HEK293 (cell line): ENCODE measurements at regions of chr12 and their contacts with region 1.

Region 1: GRCh38 chr12:6873094-6874014 is at the start of gene SPSB2:
- H3K4me3 ChIP-seq: peak within 1 kb of the TSS; percentile 67
- H3K27ac ChIP-seq: peak within 1 kb of the TSS; percentile 54; the same call in 1 of the 2 replicates
- H3K4me1 ChIP-seq: peaks cover 2% of the 10 kb centered on the region; the same call in 1 of the 2 replicates
- CTCF ChIP-seq: no peak

Region 2: GRCh38 chr12:6653987-6654386 is 219.4 kb before region 1 on chr12:
- CTCF ChIA-PET with region 1: no interaction called
- POLR2A ChIA-PET with region 1: no interaction called
- H3K4me3 ChIP-seq: no peak overlapping the region
- H3K27ac ChIP-seq: no peak overlapping the region
- H3K4me1 ChIP-seq: no peaks in the 10 kb centered on the region
- CTCF ChIP-seq: no peak

Region 3: DNA sequence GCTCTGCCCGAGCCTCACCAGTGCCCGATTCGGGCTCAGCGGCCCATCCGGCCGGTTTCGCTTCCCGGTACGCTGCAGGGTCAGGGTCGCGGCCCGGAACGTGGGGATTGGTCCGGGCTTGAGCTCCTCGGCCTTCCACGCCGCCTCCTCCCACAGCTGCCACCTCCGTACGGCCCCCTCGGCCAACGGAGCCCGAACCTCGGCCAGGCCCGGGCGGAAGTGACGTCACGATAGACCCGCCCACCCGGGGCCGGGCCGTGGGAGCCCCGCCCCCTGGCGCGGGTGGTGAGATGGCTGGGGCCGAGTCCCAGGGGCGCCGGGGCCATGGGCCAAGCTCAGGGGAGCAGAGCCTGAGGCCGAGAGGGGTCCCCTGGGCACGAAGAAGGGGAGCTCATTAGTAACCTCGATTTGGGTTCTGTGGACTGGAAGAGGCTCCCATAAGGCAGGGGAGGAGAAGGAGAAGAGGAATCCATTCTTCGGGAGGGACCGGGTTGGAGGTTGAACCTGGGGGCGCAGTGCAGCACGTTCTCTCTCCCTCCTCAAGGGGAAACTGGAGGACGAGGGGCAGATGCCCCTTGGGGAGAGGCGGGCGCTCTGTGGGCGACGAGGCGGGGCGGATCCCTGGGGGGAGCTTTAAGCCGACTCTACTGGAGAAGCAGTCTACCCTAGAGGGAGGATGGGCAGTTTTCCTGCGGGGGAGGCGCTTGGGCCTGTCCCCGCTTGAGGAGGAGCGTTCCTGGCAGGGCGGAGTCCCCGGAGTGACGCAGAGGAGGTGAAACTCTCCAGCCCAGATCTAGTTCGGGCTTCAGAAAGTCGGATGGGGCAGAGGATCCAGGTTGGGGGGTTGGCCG is 120.2 kb before region 1 on chr12 and contains the start of gene MLF2:
- CTCF ChIA-PET with region 1: interaction called, 12 read pairs
- POLR2A ChIA-PET with region 1: interaction called, 13 read pairs
- H3K4me3 ChIP-seq: peak within 1 kb of the TSS; percentile 99
- H3K27ac ChIP-seq: peak within 1 kb of the TSS; percentile 93
- H3K4me1 ChIP-seq: 0 out of 2 replicates have a peak, but pooled peaks cover 2% of the 10 kb centered on the region
- CTCF ChIP-seq: no peak; the same call in 1 of the 2 replicates

Region 4: GRCh38 chr12:6792522-6793201 is 80.7 kb before region 1 on chr12:
- CTCF ChIA-PET with region 1: no interaction called
- POLR2A ChIA-PET with region 1: no interaction called
- H3K4me3 ChIP-seq: no peak overlapping the region
- H3K27ac ChIP-seq: no peak overlapping the region
- H3K4me1 ChIP-seq: no peaks in the 10 kb centered on the region
- CTCF ChIP-seq: no peak

Region 5: DNA sequence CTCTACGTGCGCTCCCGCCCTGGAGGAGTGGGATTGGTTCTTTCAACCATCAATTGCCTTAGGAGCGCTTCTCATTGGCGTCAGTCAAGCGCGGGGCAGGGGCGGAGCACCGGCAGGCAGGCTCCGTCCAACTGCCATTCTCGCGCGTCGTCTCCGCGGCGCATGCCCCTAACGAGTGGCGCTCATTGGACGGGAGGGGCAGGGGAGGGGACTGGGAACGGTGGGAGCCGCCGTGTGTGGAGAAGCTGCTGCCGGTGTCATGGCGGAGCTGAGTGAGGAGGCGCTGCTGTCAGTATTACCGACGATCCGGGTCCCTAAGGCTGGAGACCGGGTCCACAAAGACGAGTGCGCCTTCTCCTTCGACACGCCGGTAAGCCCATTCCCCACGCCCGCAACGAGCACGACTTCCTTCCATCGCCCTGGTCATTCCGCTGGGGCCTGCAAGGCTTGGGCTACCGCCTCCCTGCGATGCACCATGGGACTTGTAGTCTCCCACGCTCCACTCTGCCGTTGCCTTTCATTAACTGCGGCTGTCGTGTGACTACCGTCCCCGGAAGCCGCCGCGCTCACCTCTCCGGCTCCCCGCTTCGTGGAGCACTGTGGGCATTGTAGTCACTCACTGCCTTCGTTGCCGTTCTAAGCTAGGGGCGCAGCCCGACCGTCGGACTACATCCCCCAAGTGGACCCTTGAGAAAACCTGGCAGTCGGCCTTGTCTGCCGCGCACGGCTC is 21.3 kb before region 1 on chr12 and contains the start of gene USP5:
- CTCF ChIA-PET with region 1: interaction called, 71 read pairs
- POLR2A ChIA-PET with region 1: interaction called, 183 read pairs
- H3K4me3 ChIP-seq: peak within 1 kb of the TSS; percentile 76
- H3K27ac ChIP-seq: peak within 1 kb of the TSS; percentile 58
- H3K4me1 ChIP-seq: peaks cover 11% of the 10 kb centered on the region
- CTCF ChIP-seq: peak; percentile 70

Region 6: DNA sequence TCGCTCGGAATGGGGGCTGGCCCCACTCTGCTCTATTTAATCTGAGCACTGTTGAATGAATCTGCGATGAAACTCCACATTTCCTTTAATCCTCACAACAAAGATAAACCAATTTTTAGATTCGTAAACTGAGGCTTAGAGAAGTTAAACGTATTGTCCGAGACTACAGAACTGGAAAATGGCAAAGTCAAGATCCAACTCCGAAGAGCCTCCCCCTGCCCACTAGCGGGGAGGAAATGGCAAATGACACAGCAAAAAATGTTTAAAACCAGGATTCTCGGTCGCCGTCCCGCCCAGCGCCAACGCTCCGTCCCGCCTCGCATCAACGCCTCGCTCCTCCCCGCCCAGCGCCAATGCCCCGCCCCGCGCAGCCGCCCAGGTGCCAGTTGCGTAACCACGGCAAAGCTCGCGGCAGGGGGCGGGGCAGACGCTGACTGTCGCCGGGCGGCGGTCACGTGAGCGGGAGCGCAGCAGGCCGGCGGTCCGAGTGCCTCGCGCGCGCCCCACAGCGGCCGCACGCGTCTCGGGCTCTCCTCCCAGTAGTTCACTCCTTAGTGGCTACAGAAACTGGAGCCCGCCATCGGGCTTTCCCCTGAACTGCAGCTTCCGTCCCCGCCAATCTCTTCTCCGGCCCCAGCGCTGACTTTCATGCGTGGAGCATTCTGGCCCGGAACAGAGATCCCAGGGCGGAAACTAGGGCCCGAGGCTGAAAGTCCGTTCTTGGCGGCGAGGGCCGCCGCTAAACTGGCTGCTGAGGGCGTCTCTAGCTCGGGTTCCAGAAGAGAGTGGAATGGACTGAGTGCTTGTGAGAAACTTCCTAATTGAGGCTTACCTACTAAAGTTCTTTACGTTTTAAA is 17.7 kb after region 1 on chr12:
- CTCF ChIA-PET with region 1: interaction called, 35 read pairs
- POLR2A ChIA-PET with region 1: interaction called, 56 read pairs
- H3K4me3 ChIP-seq: peak overlapping the region; percentile 30
- H3K27ac ChIP-seq: peak overlapping the region; percentile 78
- H3K4me1 ChIP-seq: no peaks in the 10 kb centered on the region
- CTCF ChIP-seq: peak; percentile 86

Region 7: GRCh38 chr12:6904280-6905278 is 31.2 kb after region 1 on chr12 and contains the start of gene LRRC23:
- CTCF ChIA-PET with region 1: interaction called, 7 read pairs
- POLR2A ChIA-PET with region 1: interaction called, 10 read pairs
- H3K4me3 ChIP-seq: peak within 1 kb of the TSS; percentile 42
- H3K27ac ChIP-seq: peak within 1 kb of the TSS; percentile 57
- H3K4me1 ChIP-seq: peaks cover 13% of the 10 kb centered on the region; the same call in 1 of the 2 replicates
- CTCF ChIP-seq: no peak

Region 8: DNA sequence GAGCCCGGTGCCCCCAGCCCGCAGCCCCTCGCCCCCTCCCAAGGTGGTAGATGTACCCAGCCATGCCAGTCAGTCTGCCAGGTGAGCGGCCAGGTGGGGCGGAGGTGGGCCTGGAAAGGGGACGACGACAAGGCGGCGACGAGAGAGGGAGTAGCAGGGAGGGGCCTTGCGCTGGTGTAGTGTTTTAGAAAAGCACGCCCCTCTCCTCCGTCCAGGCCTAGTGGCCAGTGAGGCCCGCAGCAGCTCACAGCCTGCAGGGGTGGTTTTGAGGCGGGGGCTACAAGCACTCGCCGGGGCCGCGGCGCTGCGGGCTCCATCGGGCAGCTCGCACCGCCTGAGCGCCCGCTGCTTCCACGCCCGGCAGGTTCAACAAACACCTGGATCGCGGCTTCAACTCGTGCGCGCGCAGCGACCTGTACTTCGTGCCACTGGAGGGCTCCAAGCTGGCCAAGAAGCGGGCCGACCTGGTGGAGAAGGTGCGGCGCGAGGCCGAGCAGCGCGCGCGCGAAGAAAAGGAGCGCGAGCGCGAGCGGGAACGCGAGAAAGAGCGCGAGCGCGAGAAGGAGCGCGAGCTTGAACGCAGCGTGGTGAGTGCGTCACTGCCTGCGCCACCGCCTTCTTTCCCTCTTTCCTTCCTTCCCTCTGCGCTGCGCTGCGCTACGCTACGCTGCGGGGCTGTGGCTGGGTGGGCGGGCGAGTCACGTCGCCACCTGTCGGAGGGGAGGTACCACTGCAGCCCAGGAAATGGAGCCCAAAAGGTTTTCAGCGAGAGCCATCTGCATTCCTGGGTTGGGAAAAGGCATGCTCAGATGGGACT is 64.3 kb after region 1 on chr12:
- CTCF ChIA-PET with region 1: interaction called, 10 read pairs
- POLR2A ChIA-PET with region 1: interaction called, 45 read pairs
- H3K4me3 ChIP-seq: peak overlapping the region; percentile 54
- H3K27ac ChIP-seq: peak overlapping the region; percentile 95
- H3K4me1 ChIP-seq: peaks cover 6% of the 10 kb centered on the region
- CTCF ChIP-seq: peak; percentile 98

Region 9: DNA sequence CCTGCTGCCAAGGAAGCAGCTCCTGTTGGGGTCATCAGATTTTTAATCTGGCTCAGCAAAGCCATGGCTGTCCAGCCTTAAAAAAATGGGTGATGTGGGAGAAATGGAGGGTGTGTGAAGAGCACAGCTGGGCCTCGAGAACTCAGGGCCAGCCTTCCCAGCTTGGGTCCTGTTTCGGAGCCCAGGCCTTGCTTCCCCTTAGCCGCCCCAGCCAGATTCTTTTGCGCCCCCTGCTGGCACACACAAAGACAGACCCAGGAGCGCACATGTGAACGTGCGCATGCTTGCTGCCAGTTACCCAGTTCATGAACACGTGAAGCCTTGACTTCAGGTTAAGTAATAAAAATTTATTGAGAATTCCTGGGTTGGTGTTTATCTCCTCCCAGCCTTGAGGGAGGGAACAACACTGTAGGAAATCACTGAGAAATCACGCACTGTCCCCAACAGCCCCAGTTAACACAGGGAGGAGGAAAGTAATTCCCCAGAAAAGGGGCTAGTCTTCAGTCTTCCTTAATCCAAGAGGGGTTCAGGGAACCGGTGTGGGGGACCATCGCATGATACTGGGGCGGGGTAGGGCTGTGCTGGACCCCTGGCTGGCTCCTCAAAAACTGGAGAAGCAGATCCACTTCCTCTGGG is 91.8 kb after region 1 on chr12:
- CTCF ChIA-PET with region 1: interaction called, 7 read pairs
- POLR2A ChIA-PET with region 1: interaction called, 16 read pairs
- H3K4me3 ChIP-seq: no peak overlapping the region
- H3K27ac ChIP-seq: peak overlapping the region; percentile 1; the same call in 1 of the 2 replicates
- H3K4me1 ChIP-seq: peaks cover 2% of the 10 kb centered on the region; the same call in 1 of the 2 replicates
- CTCF ChIP-seq: peak; percentile 93